HCT116 (cell line): ENCODE measurements at regions of chr1 and their contacts with region 1.

Region 1: DNA sequence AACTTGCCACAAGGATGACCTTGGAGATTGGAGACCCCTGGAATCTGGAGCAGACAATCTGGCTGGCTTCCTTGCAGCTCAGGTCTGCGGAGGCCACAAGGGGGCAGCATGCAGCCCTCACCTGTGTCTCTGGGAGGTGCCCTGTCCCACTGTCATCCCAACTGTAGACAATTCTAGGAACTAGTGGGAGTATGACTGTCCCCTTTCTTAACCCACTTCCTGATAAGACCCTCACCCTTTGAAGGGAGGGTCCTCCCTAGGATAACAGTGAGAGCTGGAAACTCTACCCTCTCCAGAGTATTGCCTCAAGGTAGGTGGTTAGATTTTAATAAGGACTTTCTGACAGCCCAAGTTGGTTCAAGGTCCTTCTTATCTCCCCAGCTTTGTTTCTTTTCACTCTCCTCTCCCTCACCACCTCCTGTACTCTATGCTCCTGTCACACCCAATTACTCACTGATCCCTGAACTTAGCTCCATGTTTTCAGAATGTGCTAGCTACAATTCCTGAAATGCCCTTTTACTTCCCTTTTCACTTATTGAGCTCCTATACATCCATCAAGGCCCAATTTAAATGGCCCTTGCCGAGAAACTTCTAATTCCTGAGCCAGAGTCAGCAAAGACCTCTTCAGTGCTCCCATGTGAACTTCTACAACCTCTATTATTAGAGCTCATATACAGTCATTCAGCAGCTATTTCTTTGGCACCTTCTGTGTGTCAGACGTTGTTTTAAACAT is 9.2 kb upstream of the KCNQ4 start:
- DNase-seq: peak; percentile 18
- ATAC-seq: peak; percentile 87
- H3K4me3 ChIP-seq: no peak overlapping the region
- H3K27ac ChIP-seq: no peak overlapping the region
- H3K4me1 ChIP-seq: peaks cover 0 to 5% of the 10 kb centered on the region in 2 experiments; a peak in 1 of 4 replicates
- H3K27me3 ChIP-seq: no peaks in the 10 kb centered on the region
- CTCF ChIP-seq: peak; percentile 65 to 96 (median 96); a peak in 5 of 6 replicates
- POLR2A ChIP-seq: no peak
- RAD21 ChIP-seq: peak; percentile 64

Region 2: GRCh38 chr1:40612345-40612831 is 162.0 kb before region 1 on chr1:
- CTCF ChIA-PET with region 1: interaction called, 3 read pairs
- POLR2A ChIA-PET with region 1: no interaction called
- RAD21 ChIA-PET with region 1: no interaction called
- intact Hi-C with region 1: loop called (anchors 1 kb)
- DNase-seq: peak; percentile 48
- ATAC-seq: peak; percentile 99
- H3K4me3 ChIP-seq: no peak overlapping the region
- H3K27ac ChIP-seq: no peak overlapping the region
- H3K4me1 ChIP-seq: peaks cover 0 to 4% of the 10 kb centered on the region in 2 experiments; a peak in 1 of 4 replicates
- H3K27me3 ChIP-seq: no peaks in the 10 kb centered on the region
- CTCF ChIP-seq: peak; percentile 90 to 93 (median 92)
- POLR2A ChIP-seq: no peak
- RAD21 ChIP-seq: peak; percentile 94

Region 3: GRCh38 chr1:40763742-40764532 is 10.5 kb before region 1 on chr1:
- CTCF ChIA-PET with region 1: interaction called, 21 read pairs
- POLR2A ChIA-PET with region 1: no interaction called
- RAD21 ChIA-PET with region 1: no interaction called
- intact Hi-C with region 1: no loop called
- DNase-seq: no peak
- ATAC-seq: no peak
- H3K4me3 ChIP-seq: no peak overlapping the region
- H3K27ac ChIP-seq: no peak overlapping the region
- H3K4me1 ChIP-seq: no peaks in the 10 kb centered on the region
- H3K27me3 ChIP-seq: no peaks in the 10 kb centered on the region
- CTCF ChIP-seq: no peak
- POLR2A ChIP-seq: no peak
- RAD21 ChIP-seq: no peak